ENCODE measurements at regions of chr6 and their contacts with region 1.

Region 1: GRCh38 chr6:146260886-146261285 is 232.0 kb downstream of the GRM1 start:
- DNase-seq: no peak
- ATAC-seq: no peak
- H3K4me3 ChIP-seq: no peak overlapping the region
- H3K4me3 Mint-ChIP-seq: no peak overlapping the region
- H3K27ac ChIP-seq: no peak overlapping the region
- H3K27ac Mint-ChIP-seq: no peak overlapping the region
- H3K4me1 ChIP-seq: no peaks in the 10 kb centered on the region
- H3K4me1 Mint-ChIP-seq: no peaks in the 10 kb centered on the region
- H3K27me3 ChIP-seq: no peaks in the 10 kb centered on the region
- H3K27me3 Mint-ChIP-seq: no peaks in the 10 kb centered on the region

Region 2: DNA sequence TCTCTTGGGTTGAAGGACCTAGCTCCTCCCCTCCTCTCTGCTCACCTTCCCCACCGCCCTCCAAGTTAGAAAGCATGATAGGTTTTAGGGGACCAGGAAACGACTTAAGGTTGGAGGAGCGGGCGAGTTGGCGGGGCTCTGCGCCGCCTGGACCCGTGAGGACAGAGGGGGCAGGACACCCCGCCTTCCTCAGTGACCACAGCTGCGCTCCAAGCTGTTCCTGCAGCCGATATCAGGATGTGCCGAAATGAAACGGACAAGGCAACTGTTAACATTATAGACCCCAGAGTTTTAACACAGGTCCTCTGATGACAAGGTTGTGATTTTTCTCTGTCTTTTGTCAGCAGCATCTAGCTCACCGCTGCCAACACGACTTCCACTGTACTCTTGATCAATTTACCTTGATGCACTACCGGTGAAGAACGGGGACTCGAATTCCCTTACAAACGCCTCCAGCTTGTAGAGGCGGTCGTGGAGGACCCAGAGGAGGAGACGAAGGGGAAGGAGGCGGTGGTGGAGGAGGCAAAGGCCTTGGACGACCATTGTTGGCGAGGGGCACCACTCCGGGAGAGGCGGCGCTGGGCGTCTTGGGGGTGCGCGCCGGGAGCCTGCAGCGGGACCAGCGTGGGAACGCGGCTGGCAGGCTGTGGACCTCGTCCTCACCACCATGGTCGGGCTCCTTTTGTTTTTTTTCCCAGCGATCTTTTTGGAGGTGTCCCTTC is 231.9 kb before region 1 on chr6 and contains the start of gene GRM1:
- CTCF ChIA-PET with region 1: no interaction called
- POLR2A ChIA-PET with region 1: interaction called in 1 of 2 experiments, 10 read pairs
- DNase-seq: no peak
- ATAC-seq: no peak
- H3K4me3 ChIP-seq: no peak within 1 kb of the TSS
- H3K4me3 Mint-ChIP-seq: peak within 1 kb of the TSS in 1 of 3 donors; percentile 15
- H3K27ac ChIP-seq: no peak within 1 kb of the TSS
- H3K27ac Mint-ChIP-seq: no peak within 1 kb of the TSS
- H3K4me1 ChIP-seq: peaks cover 0 to 4% of the 10 kb centered on the region in 2 experiments
- H3K4me1 Mint-ChIP-seq: peaks cover 9 to 15% (median 14%) of the 10 kb centered on the region in 3 donors
- H3K27me3 ChIP-seq: peaks cover 9 to 25% of the 10 kb centered on the region in 2 experiments
- H3K27me3 Mint-ChIP-seq: peaks cover 57 to 62% of the 10 kb centered on the region in 2 donors
- total RNA-seq, gene GRM1: not detected

Region 3: DNA sequence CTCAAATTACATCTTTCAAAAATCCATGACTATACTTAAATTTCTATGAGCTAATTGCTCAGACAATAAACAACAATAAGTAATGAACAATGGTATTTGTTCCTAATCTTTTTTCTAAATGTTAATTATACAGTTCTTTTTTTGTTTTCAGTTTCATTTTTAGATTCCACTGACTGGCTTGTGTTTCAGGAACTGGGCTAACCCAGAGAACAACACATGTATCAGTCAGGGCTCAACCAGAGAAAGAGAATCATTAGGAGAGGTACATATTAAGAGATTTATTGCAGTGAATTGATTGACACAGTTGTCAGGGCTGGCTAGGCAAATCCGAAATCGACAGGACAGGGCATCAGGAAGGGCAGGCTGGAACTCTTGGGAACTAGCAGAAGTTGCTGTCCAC is 49.2 kb before region 1 on chr6:
- CTCF ChIA-PET with region 1: no interaction called
- POLR2A ChIA-PET with region 1: no interaction called
- DNase-seq: no peak
- ATAC-seq: no peak
- H3K4me3 ChIP-seq: no peak overlapping the region
- H3K4me3 Mint-ChIP-seq: peak overlapping the region in 1 of 3 donors; percentile 13
- H3K27ac ChIP-seq: no peak overlapping the region
- H3K27ac Mint-ChIP-seq: no peak overlapping the region
- H3K4me1 ChIP-seq: no peaks in the 10 kb centered on the region
- H3K4me1 Mint-ChIP-seq: peaks cover 0 to 3% (median 0%) of the 10 kb centered on the region in 3 donors
- H3K27me3 ChIP-seq: no peaks in the 10 kb centered on the region
- H3K27me3 Mint-ChIP-seq: no peaks in the 10 kb centered on the region

Region 4: DNA sequence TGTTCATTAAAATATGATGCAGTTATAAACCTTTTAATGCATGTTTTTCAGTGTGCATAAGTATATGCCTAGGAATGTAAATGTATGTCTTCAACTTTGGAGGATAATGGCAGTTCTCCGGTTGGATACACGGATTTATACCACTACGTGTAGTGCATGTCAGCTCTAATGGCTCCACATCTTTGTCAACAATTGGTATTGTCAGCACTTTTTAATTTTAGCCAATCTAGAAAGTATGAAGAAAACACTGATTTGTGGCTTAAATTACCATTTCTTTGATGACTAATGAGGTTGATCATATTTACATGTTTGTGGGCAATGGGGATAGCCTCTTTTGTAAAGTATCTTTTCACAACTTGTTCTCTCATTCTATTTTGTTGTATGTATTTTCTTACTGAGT is 271.8 kb after region 1 on chr6:
- CTCF ChIA-PET with region 1: no interaction called
- POLR2A ChIA-PET with region 1: no interaction called
- DNase-seq: no peak
- ATAC-seq: no peak
- H3K4me3 ChIP-seq: no peak overlapping the region
- H3K4me3 Mint-ChIP-seq: no peak overlapping the region
- H3K27ac ChIP-seq: no peak overlapping the region
- H3K27ac Mint-ChIP-seq: no peak overlapping the region
- H3K4me1 ChIP-seq: no peaks in the 10 kb centered on the region
- H3K4me1 Mint-ChIP-seq: no peaks in the 10 kb centered on the region
- H3K27me3 ChIP-seq: no peaks in the 10 kb centered on the region
- H3K27me3 Mint-ChIP-seq: no peaks in the 10 kb centered on the region